ENCODE measurements at regions of chr18 and their contacts with region 1.

Region 1: GRCh38 chr18:2442791-2443398 is 128.4 kb downstream of the METTL4 start:
- DNase-seq: peak; percentile 23
- H3K4me3 Mint-ChIP-seq: no peak overlapping the region
- H3K27ac Mint-ChIP-seq: peak overlapping the region; percentile 11
- H3K4me1 Mint-ChIP-seq: peaks cover 17% of the 10 kb centered on the region
- H3K27me3 Mint-ChIP-seq: no peaks in the 10 kb centered on the region
- CTCF ChIP-seq: no peak

Region 2: GRCh38 chr18:2337552-2338141 is 105.2 kb before region 1 on chr18:
- CTCF ChIA-PET with region 1: no interaction called
- intact Hi-C with region 1: loop called (anchors 5 kb)
- DNase-seq: peak; percentile 47
- H3K4me3 Mint-ChIP-seq: no peak overlapping the region
- H3K27ac Mint-ChIP-seq: no peak overlapping the region
- H3K4me1 Mint-ChIP-seq: peaks cover 13% of the 10 kb centered on the region
- H3K27me3 Mint-ChIP-seq: no peaks in the 10 kb centered on the region
- CTCF ChIP-seq: peak; percentile 69

Region 3: GRCh38 chr18:2515908-2516625 is 73.2 kb after region 1 on chr18:
- CTCF ChIA-PET with region 1: no interaction called
- intact Hi-C with region 1: loop called (anchors 10 kb)
- DNase-seq: peak; percentile 42
- H3K4me3 Mint-ChIP-seq: no peak overlapping the region
- H3K27ac Mint-ChIP-seq: peak overlapping the region; percentile 57
- H3K4me1 Mint-ChIP-seq: peaks cover 24% of the 10 kb centered on the region
- H3K27me3 Mint-ChIP-seq: no peaks in the 10 kb centered on the region
- CTCF ChIP-seq: no peak

Region 4: GRCh38 chr18:2571200-2572143 is 128.6 kb after region 1 on chr18 and contains the starts of genes METTL4 and NDC80:
- CTCF ChIA-PET with region 1: no interaction called
- intact Hi-C with region 1: no loop called
- DNase-seq: peak; percentile 85
- H3K4me3 Mint-ChIP-seq: peak within 1 kb of the TSS; percentile 91
- H3K27ac Mint-ChIP-seq: peak within 1 kb of the TSS; percentile 84
- H3K4me1 Mint-ChIP-seq: peaks cover 48% of the 10 kb centered on the region
- H3K27me3 Mint-ChIP-seq: no peaks in the 10 kb centered on the region
- CTCF ChIP-seq: no peak
- total RNA-seq, gene METTL4: 17.2 and 20.3 TPM in 2 replicates
- total RNA-seq, gene NDC80: 49.5 and 56.0 TPM in 2 replicates